ENCODE measurements at regions of chr1 and their contacts with region 1.

Region 1: GRCh38 chr1:78839704-78840277 is 166.7 kb downstream of the ADGRL4 start:
- DNase-seq: peak; percentile 49
- H3K4me3 Mint-ChIP-seq: no peak overlapping the region
- H3K27ac Mint-ChIP-seq: no peak overlapping the region
- H3K4me1 Mint-ChIP-seq: peaks cover 21% of the 10 kb centered on the region
- H3K27me3 Mint-ChIP-seq: no peaks in the 10 kb centered on the region
- CTCF ChIP-seq: peak; percentile 36

Region 2: GRCh38 chr1:78519446-78519845 is 320.3 kb before region 1 on chr1:
- CTCF ChIA-PET with region 1: no interaction called
- intact Hi-C with region 1: no loop called
- DNase-seq: no peak
- H3K4me3 Mint-ChIP-seq: no peak overlapping the region
- H3K27ac Mint-ChIP-seq: no peak overlapping the region
- H3K4me1 Mint-ChIP-seq: no peaks in the 10 kb centered on the region
- H3K27me3 Mint-ChIP-seq: no peaks in the 10 kb centered on the region
- CTCF ChIP-seq: no peak

Region 3: GRCh38 chr1:78617615-78618026 is 222.2 kb before region 1 on chr1:
- CTCF ChIA-PET with region 1: no interaction called
- intact Hi-C with region 1: loop called (anchors 10 kb)
- DNase-seq: peak; percentile 67
- H3K4me3 Mint-ChIP-seq: no peak overlapping the region
- H3K27ac Mint-ChIP-seq: no peak overlapping the region
- H3K4me1 Mint-ChIP-seq: peaks cover 30% of the 10 kb centered on the region
- H3K27me3 Mint-ChIP-seq: no peaks in the 10 kb centered on the region
- CTCF ChIP-seq: peak; percentile 83

Region 4: GRCh38 chr1:78688701-78689100 is 151.1 kb before region 1 on chr1:
- CTCF ChIA-PET with region 1: no interaction called
- intact Hi-C with region 1: loop called (anchors 2 kb)
- DNase-seq: no peak
- H3K4me3 Mint-ChIP-seq: no peak overlapping the region
- H3K27ac Mint-ChIP-seq: no peak overlapping the region
- H3K4me1 Mint-ChIP-seq: peaks cover 10% of the 10 kb centered on the region
- H3K27me3 Mint-ChIP-seq: no peaks in the 10 kb centered on the region
- CTCF ChIP-seq: no peak

Region 5: DNA sequence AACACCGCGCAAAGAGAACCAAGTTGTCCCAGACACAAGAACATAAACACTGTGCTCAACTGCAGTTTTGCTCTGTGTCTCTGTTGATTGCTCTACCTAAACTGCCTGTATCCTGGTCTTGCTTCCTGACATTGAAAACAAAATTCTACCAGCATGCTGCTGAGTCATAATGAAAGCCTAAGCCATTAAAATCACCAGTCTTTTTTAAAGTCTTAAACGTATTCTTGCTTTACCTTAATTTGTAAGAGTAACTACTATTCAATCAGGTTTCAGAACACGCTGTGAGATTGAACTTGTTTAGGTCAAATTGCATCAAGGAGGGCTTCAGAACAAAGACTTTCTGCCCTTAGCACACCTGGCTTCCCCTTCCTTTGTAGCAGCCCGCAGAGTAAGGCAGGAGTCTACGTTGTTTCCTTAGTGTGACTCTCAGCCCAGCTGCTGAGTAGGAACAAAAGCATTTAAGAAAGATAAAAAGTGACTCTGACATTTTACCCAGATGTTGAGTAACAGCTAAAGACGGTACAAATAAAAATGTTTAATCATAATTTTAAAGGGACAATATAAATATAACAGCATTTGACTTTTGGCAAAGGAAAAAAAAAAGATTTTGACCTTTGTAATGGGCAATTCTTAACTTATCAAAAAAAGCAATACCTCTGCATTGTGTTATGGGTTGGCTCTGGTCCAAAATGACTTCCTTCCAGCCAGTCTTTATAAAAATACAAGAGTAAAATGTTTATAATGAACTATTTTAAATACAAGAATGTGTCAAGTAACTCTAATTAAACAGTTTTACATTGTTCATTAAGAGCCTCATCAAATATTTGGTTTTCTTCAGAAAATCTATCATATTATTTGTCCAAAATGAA is 353.7 kb after region 1 on chr1:
- CTCF ChIA-PET with region 1: interaction called, 8 read pairs
- intact Hi-C with region 1: loop called (anchors 1 kb)
- DNase-seq: peak; percentile 28
- H3K4me3 Mint-ChIP-seq: peak overlapping the region; percentile 10
- H3K27ac Mint-ChIP-seq: peak overlapping the region; percentile 95
- H3K4me1 Mint-ChIP-seq: peaks cover 37% of the 10 kb centered on the region
- H3K27me3 Mint-ChIP-seq: no peaks in the 10 kb centered on the region
- CTCF ChIP-seq: no peak

Region 6: GRCh38 chr1:79259388-79260336 is 419.9 kb after region 1 on chr1:
- CTCF ChIA-PET with region 1: no interaction called
- intact Hi-C with region 1: loop called (anchors 2 kb)
- DNase-seq: no peak
- H3K4me3 Mint-ChIP-seq: no peak overlapping the region
- H3K27ac Mint-ChIP-seq: no peak overlapping the region
- H3K4me1 Mint-ChIP-seq: peaks cover 9% of the 10 kb centered on the region
- H3K27me3 Mint-ChIP-seq: no peaks in the 10 kb centered on the region
- CTCF ChIP-seq: peak; percentile 20

Region 7: GRCh38 chr1:79353224-79353623 is 513.4 kb after region 1 on chr1:
- CTCF ChIA-PET with region 1: no interaction called
- intact Hi-C with region 1: loop called (anchors 5 kb)
- DNase-seq: peak; percentile 58
- H3K4me3 Mint-ChIP-seq: no peak overlapping the region
- H3K27ac Mint-ChIP-seq: no peak overlapping the region
- H3K4me1 Mint-ChIP-seq: peaks cover 23% of the 10 kb centered on the region
- H3K27me3 Mint-ChIP-seq: no peaks in the 10 kb centered on the region
- CTCF ChIP-seq: peak; percentile 45